IMR-90 (cell line): ENCODE measurements at regions of chr3 and their contacts with region 1.

Region 1: GRCh38 chr3:153161138-153161713 is 800 bp upstream of the RAP2B start:
- DNase-seq: peak; percentile 100
- ATAC-seq: peak; percentile 78
- H3K4me3 ChIP-seq: peak overlapping the region; percentile 73
- H3K27ac ChIP-seq: peak overlapping the region; percentile 98
- H3K4me1 ChIP-seq: peaks cover 4% of the 10 kb centered on the region; the same call in 1 of the 2 replicates
- H3K27me3 ChIP-seq: no peaks in the 10 kb centered on the region
- CTCF ChIP-seq: no peak
- POLR2A ChIP-seq: no peak
- RAD21 ChIP-seq: 0 out of 2 replicates have a peak, but pooled peaks have one; percentile 12

Region 2: GRCh38 chr3:153043729-153044328 is 117.4 kb before region 1 on chr3:
- CTCF ChIA-PET with region 1: interaction called, 7 read pairs
- POLR2A ChIA-PET with region 1: interaction called, 6 read pairs
- dilution Hi-C with region 1: no loop called
- in situ Hi-C with region 1: loop called (anchors 5 kb)
- intact Hi-C with region 1: loop called (anchors 1 kb)
- DNase-seq: peak; percentile 50
- ATAC-seq: peak; percentile 22; the same call in 1 of the 2 replicates
- H3K4me3 ChIP-seq: no peak overlapping the region
- H3K27ac ChIP-seq: no peak overlapping the region
- H3K4me1 ChIP-seq: peaks cover 2% of the 10 kb centered on the region
- H3K27me3 ChIP-seq: no peaks in the 10 kb centered on the region
- CTCF ChIP-seq: no peak
- POLR2A ChIP-seq: no peak
- RAD21 ChIP-seq: no peak

Region 3: GRCh38 chr3:153142961-153143360 is 18.3 kb before region 1 on chr3:
- CTCF ChIA-PET with region 1: no interaction called
- POLR2A ChIA-PET with region 1: no interaction called
- dilution Hi-C with region 1: no loop called
- in situ Hi-C with region 1: no loop called
- intact Hi-C with region 1: no loop called
- DNase-seq: peak; percentile 56
- ATAC-seq: peak; percentile 48
- H3K4me3 ChIP-seq: no peak overlapping the region
- H3K27ac ChIP-seq: no peak overlapping the region
- H3K4me1 ChIP-seq: peaks cover 8% of the 10 kb centered on the region
- H3K27me3 ChIP-seq: no peaks in the 10 kb centered on the region
- CTCF ChIP-seq: no peak
- POLR2A ChIP-seq: no peak
- RAD21 ChIP-seq: no peak

Region 4: GRCh38 chr3:153284282-153284938 is 123.2 kb after region 1 on chr3:
- CTCF ChIA-PET with region 1: no interaction called
- POLR2A ChIA-PET with region 1: no interaction called
- dilution Hi-C with region 1: no loop called
- in situ Hi-C with region 1: loop called (anchors 10 kb)
- intact Hi-C with region 1: loop called (anchors 2 kb)
- DNase-seq: peak; percentile 96
- ATAC-seq: peak; percentile 95
- H3K4me3 ChIP-seq: no peak overlapping the region
- H3K27ac ChIP-seq: peak overlapping the region; percentile 29; the same call in 1 of the 2 replicates
- H3K4me1 ChIP-seq: peaks cover 4% of the 10 kb centered on the region
- H3K27me3 ChIP-seq: no peaks in the 10 kb centered on the region
- CTCF ChIP-seq: no peak
- POLR2A ChIP-seq: no peak
- RAD21 ChIP-seq: no peak

Region 5: GRCh38 chr3:153443961-153444360 is 282.7 kb after region 1 on chr3:
- CTCF ChIA-PET with region 1: no interaction called
- POLR2A ChIA-PET with region 1: no interaction called
- dilution Hi-C with region 1: no loop called
- in situ Hi-C with region 1: no loop called
- intact Hi-C with region 1: loop called (anchors 5 kb)
- DNase-seq: peak; percentile 1
- ATAC-seq: no peak
- H3K4me3 ChIP-seq: no peak overlapping the region
- H3K27ac ChIP-seq: no peak overlapping the region
- H3K4me1 ChIP-seq: no peaks in the 10 kb centered on the region
- H3K27me3 ChIP-seq: no peaks in the 10 kb centered on the region
- CTCF ChIP-seq: peak; percentile 19; the same call in 1 of the 2 replicates
- POLR2A ChIP-seq: no peak
- RAD21 ChIP-seq: no peak

Region 6: GRCh38 chr3:153768561-153769469 is 607.6 kb after region 1 on chr3:
- CTCF ChIA-PET with region 1: interaction called, 4 read pairs
- POLR2A ChIA-PET with region 1: no interaction called
- dilution Hi-C with region 1: no loop called
- in situ Hi-C with region 1: loop called (anchors 25 kb)
- intact Hi-C with region 1: loop called (anchors 1 kb)
- DNase-seq: peak; percentile 61
- ATAC-seq: peak; percentile 100
- H3K4me3 ChIP-seq: no peak overlapping the region
- H3K27ac ChIP-seq: no peak overlapping the region
- H3K4me1 ChIP-seq: no peaks in the 10 kb centered on the region
- H3K27me3 ChIP-seq: no peaks in the 10 kb centered on the region
- CTCF ChIP-seq: peak; percentile 84
- POLR2A ChIP-seq: no peak
- RAD21 ChIP-seq: peak; percentile 87